CD4-positive, alpha-beta memory T cell (primary cell): ENCODE measurements at regions of chr1 and their contacts with region 1.

Region 1: GRCh38 chr1:201023517-201023902 is at the start of gene KIF21B:
- DNase-seq: peak; percentile 89 to 92 (median 92)
- H3K4me3 ChIP-seq: peak within 1 kb of the TSS; percentile 67 to 86
- H3K4me3 Mint-ChIP-seq: peak within 1 kb of the TSS; percentile 92 to 98 (median 96)
- H3K27ac ChIP-seq: peak within 1 kb of the TSS; percentile 69
- H3K27ac Mint-ChIP-seq: peak within 1 kb of the TSS; percentile 95 to 100 (median 97)
- H3K4me1 ChIP-seq: peaks cover 70% of the 10 kb centered on the region
- H3K4me1 Mint-ChIP-seq: peaks cover 54 to 78% (median 64%) of the 10 kb centered on the region in 4 donors
- H3K27me3 ChIP-seq: no peaks in the 10 kb centered on the region
- H3K27me3 Mint-ChIP-seq: no peaks in the 10 kb centered on the region
- total RNA-seq, gene KIF21B: 90.3 to 94.7 TPM

Region 2: DNA sequence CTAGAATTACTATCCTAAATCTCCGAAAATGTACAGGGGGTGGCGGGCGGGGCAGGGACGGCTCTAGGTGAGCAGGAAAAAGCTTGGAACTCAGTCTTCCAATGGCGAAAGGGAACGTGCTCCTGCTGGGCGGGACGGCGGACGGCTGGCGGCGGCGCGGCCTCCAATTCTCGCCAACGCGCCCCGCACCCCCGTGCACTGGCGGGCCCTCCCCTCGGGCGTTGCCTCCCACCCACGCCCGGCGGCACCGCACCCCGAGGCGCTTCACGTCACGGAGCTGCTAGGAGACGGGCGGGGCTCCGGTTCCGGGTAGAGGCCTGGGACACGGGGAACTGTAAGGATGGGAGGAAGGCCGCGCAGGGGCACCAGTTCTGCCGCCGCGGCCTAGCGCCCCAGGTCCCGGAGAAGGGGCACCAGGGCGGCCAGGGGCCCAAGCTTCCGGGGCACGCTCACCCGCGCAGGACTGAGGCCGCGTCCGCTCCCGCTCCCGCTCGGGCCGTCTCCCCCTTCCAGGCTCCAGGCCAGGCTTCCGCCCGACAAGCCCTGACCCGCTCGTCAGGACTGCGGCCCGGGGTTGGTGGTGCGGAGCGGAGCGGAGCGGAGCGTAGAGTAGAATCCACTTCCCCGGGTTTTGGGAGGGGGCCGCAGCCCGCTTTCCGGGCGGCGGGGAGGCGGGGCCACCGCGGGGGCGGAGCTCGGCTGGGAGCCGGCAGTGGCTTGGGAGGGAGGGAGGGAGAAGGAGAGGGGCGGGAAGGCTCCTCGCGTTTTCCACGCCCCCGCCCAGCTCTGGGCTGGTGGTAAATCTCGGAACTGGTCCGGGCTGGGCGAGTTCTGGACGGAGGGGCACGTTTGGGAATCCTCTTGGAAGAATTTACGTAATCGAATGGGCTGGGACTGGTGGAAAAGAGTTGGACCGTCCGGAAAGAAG is 353.9 kb before region 1 on chr1 and contains the start of gene DDX59:
- CTCF ChIA-PET with region 1: interaction called, 4 read pairs
- POLR2A ChIA-PET with region 1: interaction called, 12 read pairs
- intact Hi-C with region 1: loop called (anchors 2 kb)
- DNase-seq: peak; percentile 85 to 92 (median 87)
- H3K4me3 ChIP-seq: peak within 1 kb of the TSS; percentile 57 to 95
- H3K4me3 Mint-ChIP-seq: peak within 1 kb of the TSS; percentile 95 to 99 (median 98)
- H3K27ac ChIP-seq: peak within 1 kb of the TSS; percentile 98
- H3K27ac Mint-ChIP-seq: peak within 1 kb of the TSS; percentile 95 to 99 (median 98)
- H3K4me1 ChIP-seq: peaks cover 39% of the 10 kb centered on the region
- H3K4me1 Mint-ChIP-seq: peaks cover 29 to 57% (median 41%) of the 10 kb centered on the region in 4 donors
- H3K27me3 ChIP-seq: no peaks in the 10 kb centered on the region
- H3K27me3 Mint-ChIP-seq: no peaks in the 10 kb centered on the region
- total RNA-seq, gene DDX59: 37.0 to 37.5 TPM

Region 3: GRCh38 chr1:200979574-200980451 is 43.7 kb before region 1 on chr1:
- CTCF ChIA-PET with region 1: interaction called, 54 read pairs
- POLR2A ChIA-PET with region 1: interaction called, 5 read pairs
- intact Hi-C with region 1: loop called (anchors 5 kb)
- DNase-seq: peak; percentile 42 to 57 (median 53)
- H3K4me3 ChIP-seq: no peak overlapping the region
- H3K4me3 Mint-ChIP-seq: no peak overlapping the region
- H3K27ac ChIP-seq: no peak overlapping the region
- H3K27ac Mint-ChIP-seq: peak overlapping the region in 1 of 7 donors; percentile 61
- H3K4me1 ChIP-seq: no peaks in the 10 kb centered on the region
- H3K4me1 Mint-ChIP-seq: peaks cover 0 to 1% (median 0%) of the 10 kb centered on the region in 4 donors
- H3K27me3 ChIP-seq: no peaks in the 10 kb centered on the region
- H3K27me3 Mint-ChIP-seq: no peaks in the 10 kb centered on the region

Region 4: GRCh38 chr1:201042779-201043461 is 19.4 kb after region 1 on chr1:
- CTCF ChIA-PET with region 1: interaction called, 90 read pairs
- POLR2A ChIA-PET with region 1: interaction called, 4 read pairs
- intact Hi-C with region 1: loop called (anchors 1 kb)
- DNase-seq: peak; percentile 67 to 74 (median 72)
- H3K4me3 ChIP-seq: no peak overlapping the region
- H3K4me3 Mint-ChIP-seq: no peak overlapping the region
- H3K27ac ChIP-seq: no peak overlapping the region
- H3K27ac Mint-ChIP-seq: peak overlapping the region in 2 of 7 donors; percentile 37 to 77
- H3K4me1 ChIP-seq: no peaks in the 10 kb centered on the region
- H3K4me1 Mint-ChIP-seq: peaks cover 0 to 3% (median 3%) of the 10 kb centered on the region in 4 donors
- H3K27me3 ChIP-seq: no peaks in the 10 kb centered on the region
- H3K27me3 Mint-ChIP-seq: peaks cover 0 to 3% of the 10 kb centered on the region in 2 donors

Region 5: GRCh38 chr1:201126832-201127754 is 103.6 kb after region 1 on chr1 and contains the start of gene ASCL5:
- CTCF ChIA-PET with region 1: no interaction called
- POLR2A ChIA-PET with region 1: no interaction called
- intact Hi-C with region 1: no loop called
- DNase-seq: no peak
- H3K4me3 ChIP-seq: no peak within 1 kb of the TSS
- H3K4me3 Mint-ChIP-seq: no peak within 1 kb of the TSS
- H3K27ac ChIP-seq: no peak within 1 kb of the TSS
- H3K27ac Mint-ChIP-seq: no peak within 1 kb of the TSS
- H3K4me1 ChIP-seq: no peaks in the 10 kb centered on the region
- H3K4me1 Mint-ChIP-seq: peaks cover 0 to 3% (median 0%) of the 10 kb centered on the region in 4 donors
- H3K27me3 ChIP-seq: peaks cover 4% of the 10 kb centered on the region
- H3K27me3 Mint-ChIP-seq: peaks cover 7 to 8% of the 10 kb centered on the region in 2 donors
- total RNA-seq, gene ASCL5: 0.30 TPM in 1 of 2 experiments, not detected in the other

Region 6: DNA sequence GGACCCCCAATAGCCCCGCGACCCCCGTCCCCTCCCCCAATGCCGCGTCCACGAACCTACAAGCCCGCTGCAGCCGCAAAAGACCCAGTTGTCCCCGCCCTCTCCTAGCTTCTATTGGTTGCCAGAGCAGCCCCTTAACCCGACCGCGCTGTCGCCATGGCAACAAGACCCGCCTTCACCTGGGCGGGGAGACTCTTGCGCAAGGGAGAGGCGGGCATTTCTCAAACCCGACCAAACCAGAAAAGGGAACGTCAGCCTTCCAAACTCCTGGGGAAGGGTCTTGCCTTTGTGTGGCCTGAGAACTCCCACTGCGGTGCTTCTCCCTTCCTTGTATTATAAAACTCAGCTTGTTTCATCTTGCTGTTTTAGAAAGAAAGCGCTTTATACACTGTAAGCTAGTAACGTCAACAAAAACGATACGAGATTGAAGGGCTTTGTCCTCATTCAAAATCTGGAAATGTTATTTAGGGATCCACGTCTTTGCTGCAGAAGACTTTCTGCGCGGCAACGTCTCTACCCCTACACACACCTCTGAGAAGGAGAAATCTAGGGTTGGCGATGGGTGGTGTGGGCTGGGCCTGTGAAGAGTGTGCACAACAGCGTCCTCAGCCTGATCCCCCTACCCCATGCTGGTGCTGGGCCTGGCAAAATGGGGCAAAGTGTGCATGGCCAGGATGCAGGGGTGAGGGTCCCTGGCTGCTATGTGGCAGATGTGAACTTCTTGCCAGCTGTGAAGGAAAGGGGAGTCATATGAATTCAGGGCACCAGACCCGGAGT is 131.1 kb after region 1 on chr1 and contains the start of gene TMEM9:
- CTCF ChIA-PET with region 1: interaction called, 4 read pairs
- POLR2A ChIA-PET with region 1: interaction called, 4 read pairs
- intact Hi-C with region 1: loop called (anchors 5 kb)
- DNase-seq: peak; percentile 95 to 98 (median 96)
- H3K4me3 ChIP-seq: peak within 1 kb of the TSS; percentile 64 to 73
- H3K4me3 Mint-ChIP-seq: peak within 1 kb of the TSS; percentile 88 to 96 (median 92)
- H3K27ac ChIP-seq: peak within 1 kb of the TSS; percentile 48
- H3K27ac Mint-ChIP-seq: peak within 1 kb of the TSS; percentile 89 to 94 (median 94)
- H3K4me1 ChIP-seq: peaks cover 21% of the 10 kb centered on the region
- H3K4me1 Mint-ChIP-seq: peaks cover 18 to 33% (median 22%) of the 10 kb centered on the region in 4 donors
- H3K27me3 ChIP-seq: no peaks in the 10 kb centered on the region
- H3K27me3 Mint-ChIP-seq: peaks cover 6 to 18% of the 10 kb centered on the region in 2 donors
- total RNA-seq, gene TMEM9: 20.6 to 21.1 TPM